ENCODE measurements at regions of chr7 and their contacts with region 1.

Region 1: GRCh38 chr7:149497456-149498261 is at the start of gene ZNF746:
- DNase-seq: peak; percentile 52 to 97 (median 80)

Region 2: DNA sequence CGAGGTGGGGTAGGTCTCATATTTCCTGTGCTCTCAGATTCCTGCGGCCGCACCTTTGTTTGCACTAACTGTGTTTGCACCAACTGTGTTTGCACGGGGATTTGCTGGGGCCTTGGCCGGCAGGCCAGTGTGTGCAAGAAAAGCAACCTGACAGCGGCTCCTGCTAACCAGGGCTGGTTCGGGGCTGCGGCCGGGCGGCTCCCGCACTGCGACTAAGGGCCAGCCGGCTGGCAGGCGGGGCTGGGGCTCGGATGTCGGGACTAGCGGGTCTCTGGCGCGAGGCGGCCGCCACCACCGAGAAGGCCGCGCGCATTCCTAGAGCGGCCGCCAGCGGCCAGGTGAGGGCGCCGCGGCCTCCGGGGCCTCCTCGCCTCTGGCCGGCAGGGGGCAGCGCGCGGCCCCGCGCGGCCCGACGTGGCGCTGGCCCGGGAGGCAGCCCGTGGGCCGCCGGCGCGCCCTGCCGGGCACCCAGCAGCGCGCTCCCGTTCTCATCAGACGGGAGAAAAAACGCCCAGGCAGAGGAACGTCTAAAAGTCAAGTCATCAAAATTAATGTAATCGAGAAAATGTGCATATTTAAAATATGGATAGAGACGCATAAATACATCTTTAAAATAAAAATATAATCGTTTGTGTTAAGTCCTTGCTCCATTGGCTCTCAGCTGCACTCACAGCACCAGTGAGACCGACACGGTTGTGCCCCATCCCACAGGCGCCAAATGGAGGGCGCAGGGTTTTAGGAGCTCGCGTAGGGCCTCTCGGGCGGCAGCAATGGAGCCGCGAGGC is 75.3 kb before region 1 on chr7:
- intact Hi-C with region 1: loop called (anchors 5 kb)
- DNase-seq: peak in 3 of 10 donors; percentile 61 to 91 (median 79)

Region 3: DNA sequence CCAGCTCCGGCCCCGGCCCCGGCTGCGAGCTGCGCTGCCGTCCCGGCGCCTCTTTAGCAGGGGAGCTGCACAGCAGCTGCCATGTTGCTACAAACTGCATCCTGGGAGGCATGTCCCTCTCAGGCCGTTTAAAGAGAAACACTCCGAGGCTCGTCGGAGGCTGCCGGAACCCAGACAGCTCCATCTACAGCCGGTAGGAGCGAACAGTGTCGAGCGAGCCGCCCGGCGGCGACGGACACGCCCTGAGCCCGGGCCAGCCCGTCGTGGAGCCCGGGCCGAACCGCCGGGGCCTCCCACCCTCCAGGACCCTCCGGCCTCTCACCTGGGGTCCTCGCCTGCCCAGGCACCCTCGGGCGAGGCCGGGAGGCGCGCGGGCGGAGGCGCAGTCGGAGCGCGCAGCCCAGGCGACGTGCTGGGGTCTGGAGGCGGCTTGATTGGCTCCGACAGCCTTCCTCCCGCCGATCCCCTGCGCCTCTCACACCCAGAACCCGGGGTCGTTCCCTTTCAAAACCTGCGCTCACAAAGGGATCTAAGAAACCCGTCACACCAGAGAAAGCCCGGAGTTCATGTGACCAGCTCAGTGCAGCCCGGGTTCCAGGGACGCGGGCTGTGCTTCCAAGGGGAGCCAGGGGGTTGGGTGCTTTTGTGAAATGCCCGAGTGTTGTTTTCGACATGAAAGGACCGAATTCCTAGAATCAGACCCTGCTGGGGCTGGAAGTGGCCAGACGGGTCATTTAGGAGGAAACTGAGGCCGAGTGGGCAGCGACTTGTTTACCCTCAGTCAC is 37.0 kb before region 1 on chr7 and contains the start of gene ZNF777:
- intact Hi-C with region 1: loop called (anchors 5 kb)
- DNase-seq: peak; percentile 59 to 97 (median 80)

Region 4: GRCh38 chr7:149558149-149558861 is 60.6 kb after region 1 on chr7:
- intact Hi-C with region 1: no loop called
- DNase-seq: no peak

Measured in posterior cingulate gyrus (tissue), 11 donors.